Caco-2 (cell line): ENCODE measurements at regions of chr2 and their contacts with region 1.

Region 1: DNA sequence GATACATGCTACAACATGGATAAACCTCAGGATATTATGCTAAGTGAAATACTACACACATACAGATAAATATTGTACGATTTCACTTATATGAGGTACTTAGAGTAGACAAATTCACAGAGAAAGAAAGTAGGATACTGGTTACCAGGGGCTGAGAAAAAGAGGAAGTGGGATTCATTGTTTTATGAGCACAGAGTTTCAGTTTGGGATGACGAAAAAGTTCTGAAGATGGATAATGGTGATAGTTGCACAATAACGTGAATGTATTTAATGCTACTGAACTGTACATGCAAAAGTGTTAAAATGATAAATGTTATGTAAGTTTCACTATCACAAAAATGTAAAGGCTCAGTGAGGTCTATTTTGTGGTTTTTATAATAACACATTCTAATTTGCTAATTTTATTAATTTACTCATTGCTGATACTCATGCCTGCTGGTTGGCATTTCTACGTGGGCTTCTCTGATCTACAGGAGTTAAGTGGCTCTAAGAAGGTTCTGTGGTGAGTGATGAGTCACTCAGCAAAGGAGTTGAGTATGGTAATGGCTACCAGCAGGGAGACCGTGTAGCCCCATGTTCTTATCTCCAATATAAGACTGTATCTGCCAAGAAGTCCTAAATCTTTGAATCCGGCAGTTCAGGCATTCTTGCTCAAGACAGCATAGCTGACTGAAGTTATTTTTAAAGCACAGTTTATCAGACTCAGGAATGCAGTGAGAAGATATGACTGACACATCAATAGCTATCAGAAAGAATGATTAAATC is 41.1 kb downstream of the UPP2 start:
- DNase-seq: peak; percentile 40 to 71
- H3K4me3 ChIP-seq: no peak overlapping the region
- H3K4me3 Mint-ChIP-seq: no peak overlapping the region
- H3K27ac Mint-ChIP-seq: peak overlapping the region; percentile 66
- H3K4me1 ChIP-seq: peaks cover 31% of the 10 kb centered on the region
- H3K4me1 Mint-ChIP-seq: peaks cover 32% of the 10 kb centered on the region
- H3K27me3 ChIP-seq: no peaks in the 10 kb centered on the region
- H3K27me3 Mint-ChIP-seq: no peaks in the 10 kb centered on the region
- CTCF ChIP-seq: no peak

Region 2: GRCh38 chr2:158125756-158126498 is 16.8 kb before region 1 on chr2:
- CTCF ChIA-PET with region 1: interaction called, 3 read pairs
- POLR2A ChIA-PET with region 1: no interaction called
- intact Hi-C with region 1: loop called (anchors 1 kb)
- DNase-seq: no peak
- H3K4me3 ChIP-seq: no peak overlapping the region
- H3K4me3 Mint-ChIP-seq: no peak overlapping the region
- H3K27ac Mint-ChIP-seq: no peak overlapping the region
- H3K4me1 ChIP-seq: peaks cover 46% of the 10 kb centered on the region
- H3K4me1 Mint-ChIP-seq: peaks cover 40% of the 10 kb centered on the region
- H3K27me3 ChIP-seq: no peaks in the 10 kb centered on the region
- H3K27me3 Mint-ChIP-seq: no peaks in the 10 kb centered on the region
- CTCF ChIP-seq: no peak

Region 3: GRCh38 chr2:158130832-158131473 is 11.8 kb before region 1 on chr2:
- CTCF ChIA-PET with region 1: interaction called, 4 read pairs
- POLR2A ChIA-PET with region 1: no interaction called
- intact Hi-C with region 1: loop called (anchors 1 kb)
- DNase-seq: peak; percentile 63 to 76
- H3K4me3 ChIP-seq: no peak overlapping the region
- H3K4me3 Mint-ChIP-seq: peak overlapping the region; percentile 57
- H3K27ac Mint-ChIP-seq: peak overlapping the region; percentile 85
- H3K4me1 ChIP-seq: peaks cover 72% of the 10 kb centered on the region
- H3K4me1 Mint-ChIP-seq: peaks cover 42% of the 10 kb centered on the region
- H3K27me3 ChIP-seq: no peaks in the 10 kb centered on the region
- H3K27me3 Mint-ChIP-seq: no peaks in the 10 kb centered on the region
- CTCF ChIP-seq: no peak

Region 4: DNA sequence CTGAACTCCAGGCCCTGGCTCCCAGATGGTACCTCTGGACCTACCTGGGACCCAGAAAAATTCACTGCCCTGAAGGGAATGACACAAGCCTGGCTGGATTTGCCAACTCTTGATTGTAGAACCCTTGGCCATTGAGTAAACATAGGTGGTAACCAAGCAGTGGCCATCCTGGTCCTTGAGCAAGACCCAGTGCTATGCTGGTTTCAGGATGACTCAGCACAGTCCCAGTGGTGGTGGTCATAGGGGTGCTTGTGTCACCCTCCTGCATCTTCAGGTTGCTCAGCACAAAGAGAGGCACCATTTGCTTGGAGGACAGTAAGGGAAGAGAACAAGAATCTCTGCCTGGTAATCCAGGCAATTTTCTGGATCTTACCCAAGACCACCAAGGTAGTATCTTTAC is 11.8 kb after region 1 on chr2:
- CTCF ChIA-PET with region 1: no interaction called
- POLR2A ChIA-PET with region 1: no interaction called
- intact Hi-C with region 1: loop called (anchors 2 kb)
- DNase-seq: no peak
- H3K4me3 ChIP-seq: no peak overlapping the region
- H3K4me3 Mint-ChIP-seq: no peak overlapping the region
- H3K27ac Mint-ChIP-seq: no peak overlapping the region
- H3K4me1 ChIP-seq: peaks cover 17% of the 10 kb centered on the region
- H3K4me1 Mint-ChIP-seq: peaks cover 9% of the 10 kb centered on the region
- H3K27me3 ChIP-seq: no peaks in the 10 kb centered on the region
- H3K27me3 Mint-ChIP-seq: no peaks in the 10 kb centered on the region
- CTCF ChIP-seq: no peak

Region 5: GRCh38 chr2:158366342-158366741 is 223.6 kb after region 1 on chr2:
- CTCF ChIA-PET with region 1: no interaction called
- POLR2A ChIA-PET with region 1: no interaction called
- intact Hi-C with region 1: no loop called
- DNase-seq: no peak
- H3K4me3 ChIP-seq: no peak overlapping the region
- H3K4me3 Mint-ChIP-seq: no peak overlapping the region
- H3K27ac Mint-ChIP-seq: no peak overlapping the region
- H3K4me1 ChIP-seq: no peaks in the 10 kb centered on the region
- H3K4me1 Mint-ChIP-seq: no peaks in the 10 kb centered on the region
- H3K27me3 ChIP-seq: no peaks in the 10 kb centered on the region
- H3K27me3 Mint-ChIP-seq: no peaks in the 10 kb centered on the region
- CTCF ChIP-seq: no peak